ENCODE measurements at regions of chr5 and their contacts with region 1.

Region 1: DNA sequence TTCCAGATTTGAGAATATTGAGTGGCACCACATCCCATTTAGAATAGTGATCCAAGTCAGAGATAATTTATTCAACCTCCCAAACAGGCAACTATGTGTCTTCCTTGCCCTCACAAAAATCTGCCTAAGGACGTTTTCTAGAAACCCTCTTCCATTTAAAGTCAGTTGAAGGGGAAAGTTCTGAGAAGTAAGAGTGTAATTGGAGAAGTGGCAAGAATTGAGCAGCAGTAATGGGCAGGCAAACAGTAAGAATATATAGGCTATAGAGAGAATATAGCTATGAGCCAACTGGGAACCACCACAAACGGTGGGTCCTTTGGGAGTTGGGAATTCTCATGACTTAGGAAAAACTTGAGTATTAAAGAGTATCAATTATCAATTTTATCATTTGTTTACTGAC is 31.1 kb upstream of the CETN3 start:
- DNase-seq: no peak
- H3K4me3 ChIP-seq: no peak overlapping the region
- H3K27ac ChIP-seq: no peak overlapping the region
- H3K4me1 ChIP-seq: peaks cover 0 to 6% of the 10 kb centered on the region in 2 donors
- H3K27me3 ChIP-seq: no peaks in the 10 kb centered on the region
- CTCF ChIP-seq: no peak
- POLR2A ChIP-seq: no peak

Region 2: GRCh38 chr5:90421136-90421535 is 19.5 kb before region 1 on chr5:
- intact Hi-C with region 1: loop called (anchors 1 kb)
- DNase-seq: no peak
- H3K4me3 ChIP-seq: no peak overlapping the region
- H3K27ac ChIP-seq: no peak overlapping the region
- H3K4me1 ChIP-seq: no peaks in the 10 kb centered on the region
- H3K27me3 ChIP-seq: no peaks in the 10 kb centered on the region
- CTCF ChIP-seq: no peak
- POLR2A ChIP-seq: no peak

Measured in breast epithelium (tissue), 4 donors.